Calu3 (cell line): ENCODE measurements at regions of chr16 and their contacts with region 1.

Region 1: DNA sequence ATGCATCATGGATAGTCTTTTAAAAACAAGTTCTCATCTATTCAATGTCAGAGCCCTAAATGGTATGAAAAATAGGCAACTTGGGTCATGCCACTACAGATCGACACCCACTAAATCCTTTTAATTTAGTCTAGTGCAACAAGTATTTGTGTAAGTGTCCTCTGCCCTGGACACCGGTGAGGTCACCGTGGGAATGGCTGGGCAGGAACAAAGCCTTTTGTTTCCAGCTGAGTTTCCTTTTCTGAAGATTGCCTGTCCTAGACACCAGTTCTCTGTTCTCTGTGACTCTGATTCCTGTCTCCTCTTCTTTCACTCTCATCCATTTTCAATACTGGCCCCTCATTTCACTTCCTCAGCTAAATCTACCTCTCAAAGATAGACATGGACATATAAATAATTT is 446.5 kb downstream of the MAF start:
- DNase-seq: peak; percentile 49
- H3K4me3 Mint-ChIP-seq: no peak overlapping the region
- H3K27ac Mint-ChIP-seq: peak overlapping the region; percentile 45
- H3K4me1 Mint-ChIP-seq: peaks cover 64% of the 10 kb centered on the region
- H3K27me3 Mint-ChIP-seq: no peaks in the 10 kb centered on the region
- CTCF ChIP-seq: no peak

Region 2: GRCh38 chr16:79169239-79169638 is 15.2 kb after region 1 on chr16:
- CTCF ChIA-PET with region 1: no interaction called
- intact Hi-C with region 1: loop called (anchors 2 kb)
- DNase-seq: no peak
- H3K4me3 Mint-ChIP-seq: no peak overlapping the region
- H3K27ac Mint-ChIP-seq: no peak overlapping the region
- H3K4me1 Mint-ChIP-seq: peaks cover 18% of the 10 kb centered on the region
- H3K27me3 Mint-ChIP-seq: no peaks in the 10 kb centered on the region
- CTCF ChIP-seq: no peak

Region 3: DNA sequence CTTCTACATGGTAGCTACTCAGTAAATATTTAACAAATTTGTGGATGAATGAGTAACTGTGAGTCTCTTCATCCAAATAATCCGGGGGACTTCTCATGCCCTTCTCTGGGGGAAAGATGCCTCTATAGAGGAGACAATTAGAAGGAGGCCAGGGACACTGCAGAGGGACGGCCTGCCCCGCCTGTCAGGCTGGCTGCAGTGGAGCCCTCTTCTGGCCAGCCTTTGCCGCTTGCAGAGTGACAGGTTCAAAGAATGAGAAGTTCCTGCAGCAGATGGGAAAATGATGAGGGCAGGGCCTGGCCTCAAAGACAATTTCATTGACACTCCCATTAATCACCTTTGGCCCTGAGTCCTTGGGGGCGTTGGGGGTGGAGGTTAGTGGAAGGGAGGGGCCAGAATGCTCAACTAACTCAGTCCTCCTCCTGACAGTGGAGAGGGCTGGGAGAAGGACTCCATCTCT is 107.4 kb after region 1 on chr16:
- CTCF ChIA-PET with region 1: no interaction called
- intact Hi-C with region 1: loop called (anchors 5 kb)
- DNase-seq: peak; percentile 56
- H3K4me3 Mint-ChIP-seq: no peak overlapping the region
- H3K27ac Mint-ChIP-seq: no peak overlapping the region
- H3K4me1 Mint-ChIP-seq: no peaks in the 10 kb centered on the region
- H3K27me3 Mint-ChIP-seq: peaks cover 41% of the 10 kb centered on the region
- CTCF ChIP-seq: no peak